Left ventricle myocardium inferior (tissue), 1 donor: ENCODE measurements at regions of chr6 and their contacts with region 1.

Region 1: DNA sequence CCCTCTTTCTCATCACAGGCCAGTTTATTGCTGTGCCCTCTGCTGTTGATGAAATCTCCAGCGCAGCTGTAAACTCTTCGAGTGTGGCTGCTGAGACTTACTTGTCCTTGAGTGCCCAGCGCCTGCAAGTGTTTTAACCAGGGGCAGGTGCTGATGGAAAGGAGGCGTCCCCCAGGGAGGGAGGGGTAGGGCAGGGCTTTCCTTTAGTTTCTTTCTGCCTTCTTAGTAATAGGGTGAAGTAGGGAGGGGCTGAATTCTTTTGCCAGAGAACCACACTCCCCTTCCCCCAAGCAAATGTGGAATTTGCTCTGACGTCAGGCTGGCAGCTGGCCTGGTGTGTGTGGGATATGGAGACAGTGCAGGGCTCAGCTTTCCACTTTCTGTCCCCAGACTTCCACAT is 61.2 kb downstream of the IGF2R start:
- DNase-seq: peak; percentile 90
- H3K4me3 ChIP-seq: peak overlapping the region; percentile 11
- H3K27ac ChIP-seq: peak overlapping the region; percentile 81
- H3K4me1 ChIP-seq: peaks cover 30% of the 10 kb centered on the region
- H3K27me3 ChIP-seq: no peaks in the 10 kb centered on the region
- CTCF ChIP-seq: no peak

Region 2: GRCh38 chr6:159981403-159982245 is 48.5 kb before region 1 on chr6:
- intact Hi-C with region 1: loop called (anchors 10 kb)
- DNase-seq: no peak
- H3K4me3 ChIP-seq: peak overlapping the region; percentile 39
- H3K27ac ChIP-seq: peak overlapping the region; percentile 89
- H3K4me1 ChIP-seq: peaks cover 95% of the 10 kb centered on the region
- H3K27me3 ChIP-seq: no peaks in the 10 kb centered on the region
- CTCF ChIP-seq: no peak